WTC11 (cell line): ENCODE measurements at regions of chr20 and their contacts with region 1.

Region 1: GRCh38 chr20:33862709-33863403 is 51.7 kb downstream of the CHMP4B start:
- DNase-seq: peak; percentile 79
- ATAC-seq: peak; percentile 83
- H3K4me3 Mint-ChIP-seq: peak overlapping the region; percentile 25; the same call in 1 of the 2 replicates
- H3K27ac Mint-ChIP-seq: no peak overlapping the region
- H3K4me1 Mint-ChIP-seq: peaks cover 12% of the 10 kb centered on the region
- H3K27me3 Mint-ChIP-seq: no peaks in the 10 kb centered on the region
- CTCF ChIP-seq: peak; percentile 84

Region 2: GRCh38 chr20:33810885-33811777 is 51.7 kb before region 1 on chr20 and contains the start of gene CHMP4B:
- CTCF ChIA-PET with region 1: interaction called, 16 read pairs
- POLR2A ChIA-PET with region 1: no interaction called
- DNase-seq: peak; percentile 99
- ATAC-seq: peak; percentile 94
- H3K4me3 Mint-ChIP-seq: peak within 1 kb of the TSS; percentile 92
- H3K27ac Mint-ChIP-seq: peak within 1 kb of the TSS; percentile 89
- H3K4me1 Mint-ChIP-seq: peaks cover 15% of the 10 kb centered on the region
- H3K27me3 Mint-ChIP-seq: no peaks in the 10 kb centered on the region
- CTCF ChIP-seq: no peak
- total RNA-seq, gene CHMP4B: 65.4 to 72.5 TPM (median 66.1 TPM) in 3 replicates

Region 3: GRCh38 chr20:33926425-33926824 is 63.6 kb after region 1 on chr20:
- CTCF ChIA-PET with region 1: interaction called, 13 read pairs
- POLR2A ChIA-PET with region 1: no interaction called
- DNase-seq: no peak
- ATAC-seq: peak; percentile 67
- H3K4me3 Mint-ChIP-seq: no peak overlapping the region
- H3K27ac Mint-ChIP-seq: no peak overlapping the region
- H3K4me1 Mint-ChIP-seq: no peaks in the 10 kb centered on the region
- H3K27me3 Mint-ChIP-seq: no peaks in the 10 kb centered on the region
- CTCF ChIP-seq: no peak

Region 4: DNA sequence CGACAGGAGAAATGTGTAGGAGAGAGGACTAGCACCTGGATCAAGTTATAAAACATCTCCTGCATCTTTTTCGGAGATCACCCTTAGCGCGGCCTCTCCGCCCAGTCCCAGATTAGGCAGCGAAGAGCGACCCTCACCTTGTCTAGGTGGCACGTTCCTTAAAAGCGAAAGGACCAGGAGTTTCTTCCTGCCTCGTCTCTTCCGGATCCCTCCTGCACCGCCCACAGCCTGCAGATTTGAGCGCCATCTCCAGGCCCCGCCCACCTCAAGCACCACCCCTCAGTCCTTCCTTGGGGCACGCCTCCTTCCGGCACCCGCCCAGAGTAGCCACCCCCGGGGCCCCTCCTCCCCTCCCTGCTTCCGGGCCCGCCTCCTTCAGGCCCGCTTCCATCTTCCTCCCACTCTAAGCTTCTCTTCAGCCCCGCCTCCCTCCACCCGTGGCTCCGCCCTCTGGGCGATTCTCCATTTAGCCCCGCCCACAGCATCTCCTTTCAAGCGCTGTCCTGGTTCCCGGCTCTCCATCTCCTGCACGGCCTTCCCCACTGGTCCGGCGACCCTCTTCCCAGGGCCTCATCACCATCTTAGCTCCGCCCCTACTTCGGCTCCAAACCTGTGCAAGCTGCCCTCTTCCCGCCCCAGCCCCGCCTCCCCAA is 130.2 kb after region 1 on chr20:
- CTCF ChIA-PET with region 1: interaction called, 12 read pairs
- POLR2A ChIA-PET with region 1: no interaction called
- DNase-seq: peak; percentile 100
- ATAC-seq: peak; percentile 87
- H3K4me3 Mint-ChIP-seq: peak overlapping the region; percentile 88
- H3K27ac Mint-ChIP-seq: peak overlapping the region; percentile 98
- H3K4me1 Mint-ChIP-seq: peaks cover 34% of the 10 kb centered on the region
- H3K27me3 Mint-ChIP-seq: no peaks in the 10 kb centered on the region
- CTCF ChIP-seq: no peak

Region 5: DNA sequence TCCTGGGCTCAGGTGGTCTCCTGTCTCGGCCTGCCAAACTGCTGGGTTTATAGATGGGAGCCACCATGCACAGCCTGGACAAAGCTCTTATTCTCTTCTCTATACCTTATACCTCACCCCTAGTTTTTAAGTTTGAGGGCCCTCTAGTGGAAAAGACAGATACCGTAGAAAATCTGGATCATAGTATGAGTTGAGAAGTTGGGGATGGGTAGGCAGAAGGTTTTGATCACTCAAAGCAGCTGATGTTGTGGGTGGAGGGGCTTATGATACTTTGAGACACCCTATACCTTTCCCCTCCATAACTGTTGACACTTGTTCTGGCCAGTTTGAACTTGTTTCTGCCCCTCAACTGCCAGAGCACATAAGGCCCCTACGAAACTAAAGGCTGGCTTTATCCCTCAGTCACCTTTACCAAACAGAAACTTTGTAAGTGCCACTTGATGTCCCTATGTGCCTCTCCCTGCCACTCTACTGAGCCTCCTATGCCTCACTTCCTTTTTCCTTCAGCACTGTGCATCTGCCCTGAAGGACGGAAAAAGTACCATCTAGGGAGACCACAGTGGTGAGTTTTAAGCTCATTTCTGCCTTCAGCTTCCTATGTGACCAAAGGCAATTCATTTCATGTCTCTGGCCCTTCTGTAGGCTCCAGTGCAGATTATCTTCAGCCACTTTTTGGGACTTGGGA is 159.4 kb after region 1 on chr20:
- CTCF ChIA-PET with region 1: interaction called, 15 read pairs
- POLR2A ChIA-PET with region 1: no interaction called
- DNase-seq: no peak
- ATAC-seq: peak; percentile 74
- H3K4me3 Mint-ChIP-seq: no peak overlapping the region
- H3K27ac Mint-ChIP-seq: no peak overlapping the region; the same call in 1 of the 2 replicates
- H3K4me1 Mint-ChIP-seq: peaks cover 58% of the 10 kb centered on the region
- H3K27me3 Mint-ChIP-seq: no peaks in the 10 kb centered on the region
- CTCF ChIP-seq: no peak

Region 6: GRCh38 chr20:34069341-34070078 is 206.7 kb after region 1 on chr20:
- CTCF ChIA-PET with region 1: interaction called, 70 read pairs
- POLR2A ChIA-PET with region 1: no interaction called
- DNase-seq: peak; percentile 79
- ATAC-seq: peak; percentile 76
- H3K4me3 Mint-ChIP-seq: no peak overlapping the region
- H3K27ac Mint-ChIP-seq: peak overlapping the region; percentile 27; the same call in 1 of the 2 replicates
- H3K4me1 Mint-ChIP-seq: peaks cover 46% of the 10 kb centered on the region
- H3K27me3 Mint-ChIP-seq: no peaks in the 10 kb centered on the region
- CTCF ChIP-seq: peak; percentile 44; the same call in 1 of the 2 replicates

Region 7: DNA sequence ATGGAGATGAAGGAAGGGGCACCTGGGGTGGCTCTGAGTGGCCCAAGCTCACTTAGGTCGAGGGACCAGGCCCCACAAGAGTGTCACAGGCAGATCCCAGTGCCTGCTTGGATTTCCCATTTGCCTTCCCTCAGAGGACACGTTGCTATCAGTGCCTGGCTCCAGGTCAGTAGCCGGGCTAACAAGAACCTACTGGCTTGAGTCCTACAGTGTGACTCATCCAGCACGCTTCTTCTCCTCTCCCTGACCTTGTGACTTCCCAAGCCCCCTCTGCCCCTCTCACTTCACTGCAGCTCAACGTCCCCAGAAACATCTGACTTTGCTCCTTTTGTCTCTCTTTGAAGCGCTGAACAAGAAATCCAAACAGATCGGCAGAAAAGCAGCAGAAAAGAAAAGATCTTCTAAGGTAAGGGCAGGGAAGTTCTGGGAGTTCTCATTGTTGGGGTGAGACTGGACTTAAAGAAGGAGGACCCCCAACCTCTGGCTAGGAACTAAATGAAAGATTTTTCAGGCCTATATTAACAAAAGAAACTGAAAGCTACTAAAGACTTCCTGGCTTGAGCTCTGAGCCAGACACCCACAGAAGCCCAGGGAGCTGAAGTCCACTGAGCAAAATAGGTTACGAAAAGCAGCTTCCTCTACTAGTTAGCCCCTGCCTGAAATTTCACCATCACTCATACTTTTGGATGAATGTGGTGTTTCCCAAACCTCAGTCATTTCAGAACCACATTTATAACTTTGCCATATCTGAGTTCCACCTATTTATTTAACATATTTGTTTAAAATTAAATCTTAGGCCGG is 399.8 kb after region 1 on chr20:
- CTCF ChIA-PET with region 1: no interaction called
- POLR2A ChIA-PET with region 1: no interaction called
- DNase-seq: no peak
- ATAC-seq: peak; percentile 32; the same call in 1 of the 2 replicates
- H3K4me3 Mint-ChIP-seq: no peak overlapping the region
- H3K27ac Mint-ChIP-seq: peak overlapping the region; percentile 73
- H3K4me1 Mint-ChIP-seq: no peaks in the 10 kb centered on the region
- H3K27me3 Mint-ChIP-seq: no peaks in the 10 kb centered on the region
- CTCF ChIP-seq: no peak